ENCODE measurements at regions of chr15 and their contacts with region 1.

Region 1: GRCh38 chr15:67839929-67840748 is at the start of gene RNU6-1:
- DNase-seq: peak; percentile 94 to 96
- H3K4me3 ChIP-seq: peak within 1 kb of the TSS; percentile 76 to 82
- H3K27ac ChIP-seq: peak within 1 kb of the TSS; percentile 97
- H3K4me1 ChIP-seq: peaks cover 6 to 20% of the 10 kb centered on the region in 2 donors
- H3K27me3 ChIP-seq: peaks cover under 1 to 4% of the 10 kb centered on the region in 2 donors
- CTCF ChIP-seq: no peak
- POLR2A ChIP-seq: peak; percentile 66 to 87
- total RNA-seq, gene RNU6-1: not detected

Region 2: GRCh38 chr15:67456677-67457529 is 383.2 kb before region 1 on chr15:
- intact Hi-C with region 1: loop called (anchors 10 kb)
- DNase-seq: peak; percentile 59 to 61
- H3K4me3 ChIP-seq: no peak overlapping the region
- H3K27ac ChIP-seq: no peak overlapping the region
- H3K4me1 ChIP-seq: no peaks in the 10 kb centered on the region
- H3K27me3 ChIP-seq: no peaks in the 10 kb centered on the region
- CTCF ChIP-seq: peak; percentile 64 to 68 (median 66)
- POLR2A ChIP-seq: no peak

Region 3: DNA sequence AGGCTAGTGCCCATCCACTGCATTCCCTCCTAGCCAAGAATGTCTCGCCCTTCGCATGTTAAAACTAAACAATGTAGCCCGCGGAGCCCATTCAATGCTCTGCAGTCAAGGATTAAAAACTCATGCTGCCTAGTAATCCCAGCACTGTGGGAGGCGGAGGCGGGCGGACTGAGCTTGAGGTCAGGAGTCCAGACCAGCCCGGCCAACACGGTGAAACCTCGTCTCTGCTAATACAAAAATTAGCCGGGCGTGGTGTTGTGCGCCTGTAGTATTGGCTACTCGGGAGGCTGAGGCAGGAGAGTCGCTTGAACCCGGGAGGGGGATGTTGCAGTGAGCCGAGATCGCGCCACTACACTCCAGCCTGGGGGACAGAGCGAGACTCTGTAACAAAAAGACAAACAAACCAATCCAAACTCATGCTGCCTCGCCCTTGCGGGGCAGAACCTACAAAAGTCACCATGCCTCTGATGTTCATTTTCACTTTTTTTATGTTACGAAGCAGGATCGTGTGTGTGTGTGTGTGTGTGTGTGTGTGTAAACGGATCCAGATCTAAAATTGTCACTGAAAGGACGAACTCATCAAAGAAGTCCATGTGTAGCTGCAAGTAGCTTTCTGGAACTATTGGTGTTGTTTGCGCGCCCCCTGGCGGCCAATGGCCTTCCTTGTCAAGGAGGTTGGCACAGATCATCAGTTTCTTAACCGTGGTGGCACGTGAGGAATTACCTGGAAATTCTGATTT is 1035.4 kb after region 1 on chr15:
- intact Hi-C with region 1: no loop called
- DNase-seq: peak; percentile 91 to 94
- H3K4me3 ChIP-seq: peak overlapping the region; percentile 26 to 41
- H3K27ac ChIP-seq: peak overlapping the region in 1 of 2 donors; percentile 22
- H3K4me1 ChIP-seq: no peaks in the 10 kb centered on the region
- H3K27me3 ChIP-seq: no peaks in the 10 kb centered on the region
- CTCF ChIP-seq: peak; percentile 87 to 94 (median 92)
- POLR2A ChIP-seq: no peak